Transverse colon (tissue), 4 donors: ENCODE measurements at regions of chr5 and their contacts with region 1.

Region 1: DNA sequence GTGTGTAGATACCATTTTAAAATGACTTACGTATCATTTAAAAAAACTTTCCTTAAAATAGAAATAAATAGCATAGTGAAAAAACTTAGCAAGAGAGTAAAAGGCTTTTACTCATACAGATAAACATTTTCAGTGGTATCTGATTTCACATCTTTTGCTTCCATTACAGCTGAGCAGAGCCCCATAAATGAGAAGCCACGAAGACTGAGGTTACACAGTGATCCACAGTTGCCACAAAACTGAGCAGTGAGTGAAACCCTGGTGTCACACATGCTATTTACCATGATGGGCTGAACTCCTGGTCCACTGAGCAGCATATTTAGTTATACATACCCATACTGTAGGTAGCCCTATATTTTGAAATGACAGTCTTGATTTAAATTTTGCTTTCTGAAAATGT is 401.2 kb downstream of the KIAA0825 start:
- DNase-seq: no peak
- H3K4me3 ChIP-seq: no peak overlapping the region
- H3K27ac ChIP-seq: no peak overlapping the region
- H3K4me1 ChIP-seq: no peaks in the 10 kb centered on the region
- H3K27me3 ChIP-seq: no peaks in the 10 kb centered on the region
- CTCF ChIP-seq: no peak
- EP300 ChIP-seq: no peak
- POLR2A ChIP-seq: no peak

Region 2: GRCh38 chr5:94196953-94197352 is 20.3 kb before region 1 on chr5:
- in situ Hi-C with region 1: no loop called
- intact Hi-C with region 1: loop called (anchors 1 kb)
- DNase-seq: no peak
- H3K4me3 ChIP-seq: no peak overlapping the region
- H3K27ac ChIP-seq: no peak overlapping the region
- H3K4me1 ChIP-seq: no peaks in the 10 kb centered on the region
- H3K27me3 ChIP-seq: no peaks in the 10 kb centered on the region
- CTCF ChIP-seq: no peak
- EP300 ChIP-seq: no peak
- POLR2A ChIP-seq: no peak